Activated naive CD4-positive, alpha-beta T cell treated with anti-CD3 and anti-CD28 coated beads for 36 hours (primary cell): ENCODE measurements at regions of chr6 and their contacts with region 1.

Region 1: GRCh38 chr6:24720604-24721460 is 1.9 kb upstream of the C6orf62 start:
- DNase-seq: peak; percentile 100
- H3K4me3 Mint-ChIP-seq: peak overlapping the region; percentile 99
- H3K27ac Mint-ChIP-seq: peak overlapping the region; percentile 95
- H3K4me1 Mint-ChIP-seq: peaks cover 29% of the 10 kb centered on the region
- H3K27me3 Mint-ChIP-seq: no peaks in the 10 kb centered on the region

Region 2: GRCh38 chr6:24699521-24700359 is 21.1 kb before region 1 on chr6:
- CTCF ChIA-PET with region 1: interaction called, 3 read pairs
- intact Hi-C with region 1: loop called (anchors 1 kb)
- DNase-seq: no peak
- H3K4me3 Mint-ChIP-seq: no peak overlapping the region
- H3K27ac Mint-ChIP-seq: peak overlapping the region; percentile 84
- H3K4me1 Mint-ChIP-seq: peaks cover 45% of the 10 kb centered on the region
- H3K27me3 Mint-ChIP-seq: no peaks in the 10 kb centered on the region

Region 3: DNA sequence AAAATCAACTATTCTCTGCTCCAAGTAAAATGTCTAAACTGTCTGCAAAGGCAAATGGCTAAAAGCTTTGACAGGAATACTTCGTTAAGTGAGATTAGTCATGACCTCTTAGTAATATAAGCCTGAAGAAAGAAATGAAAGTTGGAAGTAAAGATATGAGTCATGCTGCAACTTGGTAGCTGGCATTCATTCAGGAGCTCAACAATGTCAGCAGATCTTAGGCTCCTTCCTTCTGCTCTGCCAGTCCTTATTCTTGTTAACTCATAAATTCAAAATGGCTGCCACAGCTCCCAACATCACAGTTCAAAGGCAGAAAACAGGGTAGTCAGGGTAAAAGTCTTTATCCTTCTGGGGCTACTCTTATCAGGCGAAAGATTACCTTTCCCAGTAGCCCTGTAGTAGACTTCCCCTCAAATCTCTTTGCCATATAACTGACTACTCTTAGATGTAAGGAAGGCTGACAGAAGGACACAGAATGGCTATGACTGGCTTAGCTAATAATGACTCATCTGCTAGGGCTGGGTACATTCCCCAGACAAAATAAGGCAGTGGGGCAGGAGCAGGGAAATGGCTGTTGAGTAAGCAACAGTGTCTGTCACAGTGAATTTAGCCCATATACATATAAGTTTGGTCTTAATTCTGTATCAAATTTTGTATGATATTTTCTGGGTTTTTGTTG is 22.6 kb after region 1 on chr6:
- CTCF ChIA-PET with region 1: interaction called, 8 read pairs
- intact Hi-C with region 1: loop called (anchors 1 kb)
- DNase-seq: peak; percentile 75
- H3K4me3 Mint-ChIP-seq: peak overlapping the region; percentile 13
- H3K27ac Mint-ChIP-seq: peak overlapping the region; percentile 88
- H3K4me1 Mint-ChIP-seq: peaks cover 28% of the 10 kb centered on the region
- H3K27me3 Mint-ChIP-seq: peaks cover 4% of the 10 kb centered on the region

Region 4: DNA sequence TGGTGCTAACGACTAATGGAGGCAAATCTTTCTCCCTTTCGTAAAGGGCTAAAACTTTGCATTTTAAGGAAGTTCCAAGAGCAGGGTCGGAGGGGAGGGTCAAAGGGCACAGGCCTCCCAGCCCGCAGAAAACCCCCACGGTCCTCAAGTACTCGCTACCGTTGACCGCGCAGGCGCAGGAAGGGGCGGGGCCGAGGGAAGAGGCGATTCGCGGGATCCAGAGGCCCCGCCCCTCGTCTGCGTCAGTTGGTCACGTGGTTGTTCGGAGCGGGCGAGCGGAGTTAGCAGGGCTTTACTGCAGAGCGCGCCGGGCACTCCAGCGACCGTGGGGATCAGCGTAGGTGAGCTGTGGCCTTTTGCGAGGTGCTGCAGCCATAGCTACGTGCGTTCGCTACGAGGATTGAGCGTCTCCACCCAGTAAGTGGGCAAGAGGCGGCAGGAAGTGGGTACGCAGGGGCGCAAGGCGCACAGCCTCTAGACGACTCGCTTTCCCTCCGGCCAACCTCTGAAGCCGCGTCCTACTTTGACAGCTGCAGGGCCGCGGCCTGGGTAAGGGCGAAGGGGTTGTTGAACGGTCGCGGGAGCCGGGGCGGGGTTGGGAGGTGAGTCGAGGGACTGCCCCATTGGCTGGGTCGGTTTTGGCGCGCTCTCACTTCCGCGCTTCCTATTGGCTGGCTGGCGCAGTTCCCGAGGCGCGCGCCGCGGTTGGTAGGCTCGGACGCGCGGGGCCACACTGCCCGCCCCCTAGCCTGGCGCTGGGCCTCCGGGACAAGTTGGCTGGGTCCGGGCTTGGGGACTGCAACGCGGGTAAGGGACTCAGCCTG is 54.1 kb after region 1 on chr6 and contains the start of gene GMNN:
- CTCF ChIA-PET with region 1: interaction called, 3 read pairs
- intact Hi-C with region 1: loop called (anchors 1 kb)
- DNase-seq: peak; percentile 99
- H3K4me3 Mint-ChIP-seq: peak within 1 kb of the TSS; percentile 96
- H3K27ac Mint-ChIP-seq: peak within 1 kb of the TSS; percentile 98
- H3K4me1 Mint-ChIP-seq: peaks cover 30% of the 10 kb centered on the region
- H3K27me3 Mint-ChIP-seq: no peaks in the 10 kb centered on the region
- total RNA-seq, gene GMNN: 84.9 to 85.1 TPM

Region 5: GRCh38 chr6:25330796-25331685 is 610.2 kb after region 1 on chr6:
- CTCF ChIA-PET with region 1: no interaction called
- intact Hi-C with region 1: no loop called
- DNase-seq: no peak
- H3K4me3 Mint-ChIP-seq: no peak overlapping the region
- H3K27ac Mint-ChIP-seq: no peak overlapping the region
- H3K4me1 Mint-ChIP-seq: peaks cover 21% of the 10 kb centered on the region
- H3K27me3 Mint-ChIP-seq: no peaks in the 10 kb centered on the region

Region 6: DNA sequence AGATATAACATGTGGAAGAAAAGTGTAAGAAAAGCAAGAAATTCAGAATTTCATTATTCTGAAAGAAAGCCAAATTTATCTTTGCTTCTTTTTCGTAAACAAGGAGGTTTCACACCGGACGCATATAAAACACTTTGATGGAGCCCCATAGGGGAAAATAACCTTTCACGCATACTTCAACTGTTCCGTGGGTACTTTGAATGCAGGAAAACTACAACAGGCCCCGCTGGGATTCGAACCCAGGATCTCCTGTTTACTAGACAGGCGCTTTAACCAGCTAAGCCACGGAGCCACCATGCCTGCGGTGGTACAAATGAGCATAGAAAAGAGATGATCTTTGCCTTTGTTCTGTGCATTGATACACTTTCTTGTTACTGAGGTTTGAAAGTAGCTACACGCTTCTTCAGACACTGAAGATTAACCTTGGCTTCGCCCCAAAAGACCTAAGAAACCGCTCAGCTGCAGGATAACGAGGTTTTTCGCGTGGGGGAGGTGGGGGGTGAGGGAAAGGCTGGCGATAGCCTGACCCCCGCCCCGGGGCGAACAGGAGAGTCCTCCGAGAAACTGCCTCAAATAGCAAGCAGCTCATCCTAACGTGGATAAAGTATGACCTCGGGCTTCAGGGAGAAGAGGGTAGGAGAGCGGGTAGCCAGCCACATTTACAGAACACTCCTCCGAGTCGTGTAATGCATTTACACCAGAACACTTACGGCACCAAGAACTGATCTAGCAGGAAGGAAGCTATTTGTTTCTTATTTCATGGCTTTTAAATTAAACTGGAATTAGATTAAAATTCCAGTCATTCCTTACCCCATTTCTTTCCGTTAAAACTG is 1812.1 kb after region 1 on chr6:
- CTCF ChIA-PET with region 1: no interaction called
- intact Hi-C with region 1: loop called (anchors 5 kb)
- DNase-seq: peak; percentile 97
- H3K4me3 Mint-ChIP-seq: peak overlapping the region; percentile 95
- H3K27ac Mint-ChIP-seq: peak overlapping the region; percentile 89
- H3K4me1 Mint-ChIP-seq: peaks cover 40% of the 10 kb centered on the region
- H3K27me3 Mint-ChIP-seq: no peaks in the 10 kb centered on the region